ENCODE measurements at regions of chr6 and their contacts with region 1.

Region 1: GRCh38 chr6:157184202-157185020 is 138.9 kb downstream of the TMEM242 start:
- DNase-seq: peak; percentile 59 to 75
- ATAC-seq: peak; percentile 70 to 97 (median 84)
- H3K4me3 ChIP-seq: no peak overlapping the region
- H3K4me3 Mint-ChIP-seq: no peak overlapping the region
- H3K27ac ChIP-seq: no peak overlapping the region
- H3K27ac Mint-ChIP-seq: peak overlapping the region in 1 of 2 donors; percentile 57
- H3K4me1 ChIP-seq: peaks cover 13% of the 10 kb centered on the region
- H3K4me1 Mint-ChIP-seq: peaks cover 14 to 25% of the 10 kb centered on the region in 2 donors
- H3K27me3 ChIP-seq: no peaks in the 10 kb centered on the region
- H3K27me3 Mint-ChIP-seq: no peaks in the 10 kb centered on the region
- CTCF ChIP-seq: peak; percentile 85

Region 2: DNA sequence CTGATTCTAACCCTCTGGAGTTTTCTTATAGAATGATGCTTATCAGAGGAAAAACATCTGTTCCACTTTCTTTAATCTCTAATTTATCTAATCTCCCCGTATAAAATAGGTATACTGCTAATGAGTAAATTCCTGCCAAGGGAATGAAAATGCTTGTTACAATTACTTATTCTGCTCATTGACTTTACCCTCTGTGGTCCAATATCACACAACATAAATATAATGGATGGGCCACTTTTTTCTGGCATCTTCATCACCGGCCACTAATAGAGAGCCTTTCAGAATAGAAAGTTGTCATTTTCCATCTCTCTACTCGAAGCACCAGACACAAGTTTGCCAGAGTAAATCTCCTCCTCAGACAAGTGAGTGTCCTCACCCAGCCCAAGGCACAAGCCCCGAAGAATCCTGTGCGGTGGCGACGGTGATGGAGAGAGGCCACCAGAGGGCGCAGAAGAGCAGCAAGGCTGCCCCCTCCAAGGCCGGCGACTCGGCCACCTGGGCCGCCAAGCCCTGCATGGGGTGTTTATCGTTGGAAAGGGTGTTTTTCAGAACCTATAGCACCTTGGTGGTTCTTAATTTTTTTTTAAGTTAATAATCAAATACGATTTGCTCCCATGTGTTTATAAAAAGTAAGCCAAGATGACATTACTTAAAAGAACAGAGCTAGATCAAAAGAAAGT is 620.1 kb before region 1 on chr6:
- intact Hi-C with region 1: loop called (anchors 1 kb)
- DNase-seq: peak; percentile 71 to 86
- ATAC-seq: peak; percentile 88 to 99 (median 99)
- H3K4me3 ChIP-seq: no peak overlapping the region
- H3K4me3 Mint-ChIP-seq: no peak overlapping the region
- H3K27ac ChIP-seq: no peak overlapping the region
- H3K27ac Mint-ChIP-seq: no peak overlapping the region
- H3K4me1 ChIP-seq: peaks cover 4% of the 10 kb centered on the region
- H3K4me1 Mint-ChIP-seq: peaks cover 0 to 5% of the 10 kb centered on the region in 2 donors
- H3K27me3 ChIP-seq: peaks cover 4% of the 10 kb centered on the region
- H3K27me3 Mint-ChIP-seq: peaks cover 41 to 46% of the 10 kb centered on the region in 2 donors
- CTCF ChIP-seq: peak; percentile 92

Region 3: GRCh38 chr6:157034436-157035230 is 149.8 kb before region 1 on chr6:
- intact Hi-C with region 1: loop called (anchors 1 kb)
- DNase-seq: peak in 1 of 2 donors; percentile 74
- ATAC-seq: peak; percentile 63 to 81 (median 74)
- H3K4me3 ChIP-seq: no peak overlapping the region
- H3K4me3 Mint-ChIP-seq: peak overlapping the region; percentile 97
- H3K27ac ChIP-seq: no peak overlapping the region
- H3K27ac Mint-ChIP-seq: peak overlapping the region; percentile 90 to 94
- H3K4me1 ChIP-seq: peaks cover 4% of the 10 kb centered on the region
- H3K4me1 Mint-ChIP-seq: peaks cover 30 to 31% of the 10 kb centered on the region in 2 donors
- H3K27me3 ChIP-seq: no peaks in the 10 kb centered on the region
- H3K27me3 Mint-ChIP-seq: no peaks in the 10 kb centered on the region
- CTCF ChIP-seq: peak; percentile 67

Region 4: GRCh38 chr6:157221007-157221816 is 36.8 kb after region 1 on chr6:
- intact Hi-C with region 1: no loop called
- DNase-seq: peak; percentile 79 to 89
- ATAC-seq: peak; percentile 83 to 94 (median 91)
- H3K4me3 ChIP-seq: peak overlapping the region; percentile 40
- H3K4me3 Mint-ChIP-seq: peak overlapping the region; percentile 78
- H3K27ac ChIP-seq: no peak overlapping the region
- H3K27ac Mint-ChIP-seq: peak overlapping the region; percentile 43 to 69
- H3K4me1 ChIP-seq: peaks cover 36% of the 10 kb centered on the region
- H3K4me1 Mint-ChIP-seq: peaks cover 16 to 29% of the 10 kb centered on the region in 2 donors
- H3K27me3 ChIP-seq: peaks cover 2% of the 10 kb centered on the region
- H3K27me3 Mint-ChIP-seq: peaks cover 10 to 15% of the 10 kb centered on the region in 2 donors
- CTCF ChIP-seq: no peak

Measured in natural killer cell (primary cell).